Esophagus muscularis mucosa (tissue), 4 donors: ENCODE measurements at regions of chr9 and their contacts with region 1.

Region 1: GRCh38 chr9:621201-621855 is 220.2 kb upstream of the DMRT1 start:
- DNase-seq: no peak
- H3K4me3 ChIP-seq: no peak overlapping the region
- H3K27ac ChIP-seq: no peak overlapping the region
- H3K4me1 ChIP-seq: peaks cover 19 to 41% (median 35%) of the 10 kb centered on the region in 4 donors
- H3K27me3 ChIP-seq: no peaks in the 10 kb centered on the region
- CTCF ChIP-seq: no peak
- EP300 ChIP-seq: no peak
- POLR2A ChIP-seq: no peak

Region 2: GRCh38 chr9:495739-496138 is 125.6 kb before region 1 on chr9:
- intact Hi-C with region 1: no loop called
- DNase-seq: no peak
- H3K4me3 ChIP-seq: no peak overlapping the region
- H3K27ac ChIP-seq: no peak overlapping the region
- H3K4me1 ChIP-seq: no peaks in the 10 kb centered on the region
- H3K27me3 ChIP-seq: no peaks in the 10 kb centered on the region
- CTCF ChIP-seq: no peak
- EP300 ChIP-seq: no peak
- POLR2A ChIP-seq: no peak

Region 3: DNA sequence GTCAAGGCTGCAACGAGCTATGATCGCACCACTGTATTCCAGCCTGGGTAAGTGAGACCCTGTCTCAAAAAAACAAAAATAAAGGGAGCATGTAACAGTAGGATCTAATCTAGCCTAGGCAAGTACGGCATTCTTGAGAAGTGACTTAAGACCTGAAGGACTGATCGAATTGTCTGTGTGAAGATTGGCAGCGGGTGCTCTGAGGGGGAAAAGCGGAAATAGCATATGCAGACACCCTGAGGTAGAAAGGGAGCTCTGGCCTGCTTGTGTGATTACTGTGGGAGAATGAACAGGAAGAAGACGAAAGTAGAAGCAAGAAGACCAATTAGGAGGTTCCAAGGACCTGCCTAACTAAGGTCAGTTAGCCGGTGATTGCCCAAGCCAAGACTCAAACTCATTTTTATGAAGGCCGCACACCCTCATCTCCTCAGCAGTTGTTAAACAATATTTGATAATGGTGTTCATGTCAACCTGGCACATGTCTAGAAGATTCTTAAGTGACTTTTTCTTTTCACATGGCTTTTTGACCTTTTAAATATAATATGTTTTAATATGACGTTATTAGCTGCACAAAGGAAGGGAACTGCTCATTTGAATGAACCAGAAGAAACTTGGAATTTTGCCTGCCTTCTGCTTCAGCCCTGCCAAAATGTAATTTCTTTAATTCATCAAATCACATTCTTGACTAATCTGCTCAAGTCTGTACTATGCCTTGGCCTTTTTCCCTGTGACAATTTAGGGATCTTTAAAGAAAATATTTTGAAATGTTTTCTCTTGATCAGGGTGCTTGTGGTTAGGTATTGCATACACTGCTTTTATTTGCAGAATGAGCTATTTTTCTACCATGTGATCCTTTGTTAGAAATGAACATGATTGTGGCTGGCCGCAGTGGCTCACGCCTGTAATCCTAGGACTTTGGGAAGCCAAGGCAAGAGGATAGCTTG is 69.1 kb before region 1 on chr9:
- intact Hi-C with region 1: no loop called
- DNase-seq: no peak
- H3K4me3 ChIP-seq: no peak overlapping the region
- H3K27ac ChIP-seq: no peak overlapping the region
- H3K4me1 ChIP-seq: peaks cover 8 to 18% (median 16%) of the 10 kb centered on the region in 4 donors
- H3K27me3 ChIP-seq: no peaks in the 10 kb centered on the region
- CTCF ChIP-seq: no peak
- EP300 ChIP-seq: no peak
- POLR2A ChIP-seq: no peak

Region 4: GRCh38 chr9:673966-674526 is 52.7 kb after region 1 on chr9:
- intact Hi-C with region 1: loop called (anchors 5 kb)
- DNase-seq: no peak
- H3K4me3 ChIP-seq: no peak overlapping the region
- H3K27ac ChIP-seq: peak overlapping the region; percentile 35 to 66 (median 49)
- H3K4me1 ChIP-seq: peaks cover 30 to 39% (median 34%) of the 10 kb centered on the region in 4 donors
- H3K27me3 ChIP-seq: no peaks in the 10 kb centered on the region
- CTCF ChIP-seq: no peak
- EP300 ChIP-seq: no peak
- POLR2A ChIP-seq: no peak

Region 5: GRCh38 chr9:744790-745484 is 123.6 kb after region 1 on chr9:
- intact Hi-C with region 1: no loop called
- DNase-seq: no peak
- H3K4me3 ChIP-seq: no peak overlapping the region
- H3K27ac ChIP-seq: peak overlapping the region; percentile 81 to 86 (median 82)
- H3K4me1 ChIP-seq: peaks cover 29 to 51% (median 48%) of the 10 kb centered on the region in 4 donors
- H3K27me3 ChIP-seq: no peaks in the 10 kb centered on the region
- CTCF ChIP-seq: no peak
- EP300 ChIP-seq: no peak
- POLR2A ChIP-seq: no peak

Region 6: GRCh38 chr9:928362-929042 is 307.2 kb after region 1 on chr9:
- intact Hi-C with region 1: no loop called
- DNase-seq: no peak
- H3K4me3 ChIP-seq: no peak overlapping the region
- H3K27ac ChIP-seq: no peak overlapping the region
- H3K4me1 ChIP-seq: no peaks in the 10 kb centered on the region
- H3K27me3 ChIP-seq: peaks cover 0 to 9% (median 0%) of the 10 kb centered on the region in 4 donors
- CTCF ChIP-seq: no peak
- EP300 ChIP-seq: no peak
- POLR2A ChIP-seq: no peak